ENCODE measurements at regions of chr3 and their contacts with region 1.

Region 1: GRCh38 chr3:5026331-5027218 is 47.3 kb downstream of the BHLHE40 start:
- DNase-seq: peak; percentile 10 to 76 (median 32)
- ATAC-seq: peak; percentile 86
- H3K4me3 ChIP-seq: peak overlapping the region; percentile 70
- H3K4me3 Mint-ChIP-seq: peak overlapping the region; percentile 61 to 90 (median 81)
- H3K27ac ChIP-seq: peak overlapping the region; percentile 41
- H3K27ac Mint-ChIP-seq: peak overlapping the region in 3 of 9 donors; percentile 38 to 92 (median 43)
- H3K4me1 ChIP-seq: peaks cover 3 to 6% of the 10 kb centered on the region in 2 donors
- H3K4me1 Mint-ChIP-seq: peaks cover 0 to 55% (median 9%) of the 10 kb centered on the region in 7 donors
- H3K27me3 ChIP-seq: no peaks in the 10 kb centered on the region
- H3K27me3 Mint-ChIP-seq: peaks cover 0 to 2% (median 0%) of the 10 kb centered on the region in 5 donors

Region 2: GRCh38 chr3:4712143-4712542 is 314.4 kb before region 1 on chr3:
- CTCF ChIA-PET with region 1: interaction called, 35 read pairs
- POLR2A ChIA-PET with region 1: no interaction called
- intact Hi-C with region 1: loop called (anchors 1 kb)
- DNase-seq: no peak
- ATAC-seq: no peak
- H3K4me3 ChIP-seq: no peak overlapping the region
- H3K4me3 Mint-ChIP-seq: no peak overlapping the region
- H3K27ac ChIP-seq: no peak overlapping the region
- H3K27ac Mint-ChIP-seq: no peak overlapping the region
- H3K4me1 ChIP-seq: no peaks in the 10 kb centered on the region
- H3K4me1 Mint-ChIP-seq: peaks cover 0 to 38% (median 0%) of the 10 kb centered on the region in 7 donors
- H3K27me3 ChIP-seq: no peaks in the 10 kb centered on the region
- H3K27me3 Mint-ChIP-seq: no peaks in the 10 kb centered on the region

Region 3: GRCh38 chr3:4722103-4722502 is 304.5 kb before region 1 on chr3:
- CTCF ChIA-PET with region 1: no interaction called
- POLR2A ChIA-PET with region 1: no interaction called
- intact Hi-C with region 1: loop called in 1 of 2 experiments (anchors 1 kb)
- DNase-seq: peak in 2 of 9 donors; percentile 27 to 33
- ATAC-seq: peak; percentile 76
- H3K4me3 ChIP-seq: no peak overlapping the region
- H3K4me3 Mint-ChIP-seq: peak overlapping the region in 1 of 10 donors; percentile 33
- H3K27ac ChIP-seq: no peak overlapping the region
- H3K27ac Mint-ChIP-seq: peak overlapping the region in 2 of 9 donors; percentile 34 to 82
- H3K4me1 ChIP-seq: no peaks in the 10 kb centered on the region
- H3K4me1 Mint-ChIP-seq: peaks cover 0 to 67% (median 9%) of the 10 kb centered on the region in 7 donors
- H3K27me3 ChIP-seq: no peaks in the 10 kb centered on the region
- H3K27me3 Mint-ChIP-seq: no peaks in the 10 kb centered on the region

Region 4: GRCh38 chr3:4906107-4906621 is 120.4 kb before region 1 on chr3:
- CTCF ChIA-PET with region 1: no interaction called
- POLR2A ChIA-PET with region 1: no interaction called
- intact Hi-C with region 1: loop called in 1 of 2 experiments (anchors 5 kb)
- DNase-seq: no peak
- ATAC-seq: no peak
- H3K4me3 ChIP-seq: no peak overlapping the region
- H3K4me3 Mint-ChIP-seq: peak overlapping the region in 2 of 10 donors; percentile 29 to 38
- H3K27ac ChIP-seq: no peak overlapping the region
- H3K27ac Mint-ChIP-seq: peak overlapping the region in 4 of 9 donors; percentile 7 to 75 (median 38)
- H3K4me1 ChIP-seq: peaks cover 14 to 35% of the 10 kb centered on the region in 2 donors
- H3K4me1 Mint-ChIP-seq: peaks cover 33 to 85% (median 58%) of the 10 kb centered on the region in 7 donors
- H3K27me3 ChIP-seq: no peaks in the 10 kb centered on the region
- H3K27me3 Mint-ChIP-seq: no peaks in the 10 kb centered on the region

Region 5: GRCh38 chr3:4986782-4987537 is 39.6 kb before region 1 on chr3:
- CTCF ChIA-PET with region 1: no interaction called
- POLR2A ChIA-PET with region 1: no interaction called
- intact Hi-C with region 1: loop called in 1 of 2 experiments (anchors 1 kb)
- DNase-seq: peak; percentile 15 to 74 (median 47)
- ATAC-seq: peak; percentile 79
- H3K4me3 ChIP-seq: peak overlapping the region; percentile 45
- H3K4me3 Mint-ChIP-seq: peak overlapping the region; percentile 74 to 90 (median 84)
- H3K27ac ChIP-seq: peak overlapping the region; percentile 44
- H3K27ac Mint-ChIP-seq: peak overlapping the region; percentile 33 to 90 (median 78)
- H3K4me1 ChIP-seq: peaks cover 26 to 47% of the 10 kb centered on the region in 2 donors
- H3K4me1 Mint-ChIP-seq: peaks cover 16 to 59% (median 35%) of the 10 kb centered on the region in 7 donors
- H3K27me3 ChIP-seq: no peaks in the 10 kb centered on the region
- H3K27me3 Mint-ChIP-seq: no peaks in the 10 kb centered on the region

Region 6: GRCh38 chr3:5057857-5058324 is 31.3 kb after region 1 on chr3:
- CTCF ChIA-PET with region 1: no interaction called
- POLR2A ChIA-PET with region 1: no interaction called
- intact Hi-C with region 1: loop called (anchors 1 to 2 kb)
- DNase-seq: peak; percentile 22 to 75 (median 64)
- ATAC-seq: peak; percentile 92
- H3K4me3 ChIP-seq: no peak overlapping the region
- H3K4me3 Mint-ChIP-seq: peak overlapping the region in 1 of 10 donors; percentile 25
- H3K27ac ChIP-seq: no peak overlapping the region
- H3K27ac Mint-ChIP-seq: no peak overlapping the region
- H3K4me1 ChIP-seq: no peaks in the 10 kb centered on the region
- H3K4me1 Mint-ChIP-seq: peaks cover 0 to 38% (median 0%) of the 10 kb centered on the region in 7 donors
- H3K27me3 ChIP-seq: no peaks in the 10 kb centered on the region
- H3K27me3 Mint-ChIP-seq: peaks cover 0 to 4% (median 0%) of the 10 kb centered on the region in 5 donors

Region 7: DNA sequence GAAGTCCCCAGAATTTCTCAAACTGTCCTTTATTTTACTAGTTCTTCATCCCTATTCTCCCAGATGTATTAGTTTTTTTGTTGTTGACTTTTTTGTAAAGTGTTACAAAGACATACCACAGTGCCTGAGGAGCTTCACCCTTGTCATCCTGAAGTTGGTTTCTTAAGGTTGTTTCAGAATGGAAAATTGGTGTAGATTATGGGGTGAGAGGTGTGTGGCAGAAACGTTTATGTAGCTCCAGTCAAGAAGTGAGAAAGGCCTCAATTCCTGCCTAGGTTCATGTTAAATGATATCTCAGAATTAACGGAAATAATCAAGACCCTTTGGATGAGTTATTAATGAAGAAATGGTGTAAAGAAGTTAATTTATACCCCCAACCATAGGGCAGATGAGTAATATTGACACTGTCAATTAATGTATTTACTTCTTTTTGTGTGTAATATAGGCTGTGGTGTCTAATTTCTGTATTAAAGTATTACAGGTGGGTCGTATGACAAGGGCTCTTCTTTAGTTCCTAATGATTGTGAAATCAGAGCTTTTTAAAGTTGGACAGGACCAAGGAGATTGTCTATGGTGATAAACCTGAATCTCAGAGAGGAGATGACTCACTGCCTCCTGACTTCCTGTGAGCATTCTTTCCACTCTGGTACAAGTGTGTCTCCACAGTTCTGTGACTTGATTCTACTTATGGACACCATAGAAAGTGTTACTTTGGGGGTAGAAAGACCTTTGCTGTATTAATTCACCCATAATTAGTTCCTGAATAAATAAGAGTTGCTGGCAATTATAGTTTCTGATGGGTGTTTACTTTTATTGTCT is 168.0 kb after region 1 on chr3:
- CTCF ChIA-PET with region 1: no interaction called
- POLR2A ChIA-PET with region 1: no interaction called
- intact Hi-C with region 1: loop called in 1 of 2 experiments (anchors 5 kb)
- DNase-seq: peak in 1 of 9 donors; percentile 69
- ATAC-seq: peak; percentile 54
- H3K4me3 ChIP-seq: no peak overlapping the region
- H3K4me3 Mint-ChIP-seq: peak overlapping the region; percentile 2 to 78 (median 46)
- H3K27ac ChIP-seq: peak overlapping the region; percentile 64
- H3K27ac Mint-ChIP-seq: peak overlapping the region; percentile 63 to 96 (median 93)
- H3K4me1 ChIP-seq: peaks cover 76 to 88% of the 10 kb centered on the region in 2 donors
- H3K4me1 Mint-ChIP-seq: peaks cover 73 to 90% (median 87%) of the 10 kb centered on the region in 7 donors
- H3K27me3 ChIP-seq: no peaks in the 10 kb centered on the region
- H3K27me3 Mint-ChIP-seq: no peaks in the 10 kb centered on the region